AG04449 (cell line): ENCODE measurements at regions of chr11 and their contacts with region 1.

Region 1: GRCh38 chr11:64000026-64000739 is 13.9 kb downstream of the OTUB1 start:
- DNase-seq: no peak
- H3K4me3 ChIP-seq: peak overlapping the region; percentile 36
- CTCF ChIP-seq: peak; percentile 86

Region 2: DNA sequence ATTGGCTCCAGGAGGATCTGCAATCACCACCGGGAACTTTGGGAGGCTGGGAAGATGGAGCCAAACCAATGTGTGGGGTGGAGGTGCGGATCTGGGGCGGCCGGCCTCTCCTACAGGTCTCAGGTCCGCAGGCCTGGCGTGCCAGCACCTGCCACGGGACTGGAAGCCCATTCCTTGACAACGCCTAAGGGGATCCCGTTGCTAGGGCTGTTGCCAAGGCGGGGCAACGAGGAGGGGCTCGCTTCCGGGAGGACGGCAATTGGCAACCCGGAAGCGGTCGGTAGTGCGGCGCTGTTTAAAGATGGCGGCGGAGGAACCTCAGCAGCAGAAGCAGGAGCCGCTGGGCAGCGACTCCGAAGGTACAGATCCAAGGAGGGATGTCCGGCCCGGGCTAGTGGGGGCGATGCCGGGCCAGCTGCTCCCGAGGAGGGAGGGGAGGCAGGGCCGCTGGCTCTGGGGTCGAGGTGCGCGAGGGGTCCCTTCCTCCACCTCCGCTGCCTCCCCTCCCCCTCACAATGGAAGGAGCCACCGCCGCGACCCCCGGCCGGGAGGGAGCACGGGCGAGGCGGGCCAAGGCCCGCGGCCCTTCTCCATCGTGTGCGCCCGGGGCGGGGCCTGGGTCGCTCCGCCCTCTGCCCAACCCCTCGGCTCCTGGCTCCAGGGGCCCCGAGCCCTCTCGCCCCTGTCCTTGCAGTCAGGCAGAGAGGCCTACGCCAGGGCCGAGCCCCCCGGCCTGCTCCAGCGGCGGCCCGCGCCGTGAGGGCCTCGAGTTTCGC is 13.8 kb before region 1 on chr11 and contains the start of gene OTUB1:
- CTCF ChIA-PET with region 1: interaction called, 49 read pairs
- POLR2A ChIA-PET with region 1: no interaction called
- DNase-seq: peak; percentile 36
- H3K4me3 ChIP-seq: peak within 1 kb of the TSS; percentile 96
- CTCF ChIP-seq: no peak

Region 3: GRCh38 chr11:64028398-64029115 is 28.4 kb after region 1 on chr11:
- CTCF ChIA-PET with region 1: interaction called, 45 read pairs
- POLR2A ChIA-PET with region 1: no interaction called
- DNase-seq: no peak
- H3K4me3 ChIP-seq: no peak overlapping the region
- CTCF ChIP-seq: no peak

Region 4: GRCh38 chr11:64067230-64067993 is 67.2 kb after region 1 on chr11:
- CTCF ChIA-PET with region 1: no interaction called
- POLR2A ChIA-PET with region 1: no interaction called
- DNase-seq: no peak
- H3K4me3 ChIP-seq: no peak overlapping the region
- CTCF ChIP-seq: no peak

Region 5: DNA sequence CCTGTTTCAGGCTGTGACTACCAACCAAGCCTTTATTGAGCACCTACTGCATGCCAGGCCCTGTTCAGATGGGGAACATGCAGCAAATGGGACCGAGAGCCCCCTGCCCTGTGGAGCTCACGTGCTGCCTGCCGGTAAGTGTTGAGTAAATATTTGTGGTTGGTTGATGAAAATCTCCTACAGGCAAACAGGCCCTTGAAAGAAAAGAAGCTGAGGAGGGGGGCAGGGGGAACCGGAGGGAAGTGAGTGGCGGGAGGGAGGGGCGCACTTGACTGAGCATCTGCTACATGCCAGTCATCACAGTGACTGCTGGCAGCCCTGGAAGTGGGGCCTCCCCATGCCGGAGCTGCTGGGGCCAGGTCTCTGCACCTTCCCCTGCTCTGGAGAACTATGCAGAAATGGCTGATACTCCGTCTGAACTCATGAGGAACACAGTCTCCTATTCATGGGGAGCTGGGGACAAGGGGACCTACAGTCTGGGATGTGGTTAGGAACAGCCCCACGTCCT is 131.6 kb after region 1 on chr11:
- CTCF ChIA-PET with region 1: interaction called, 27 read pairs
- POLR2A ChIA-PET with region 1: no interaction called
- DNase-seq: no peak
- H3K4me3 ChIP-seq: no peak overlapping the region
- CTCF ChIP-seq: no peak

Region 6: DNA sequence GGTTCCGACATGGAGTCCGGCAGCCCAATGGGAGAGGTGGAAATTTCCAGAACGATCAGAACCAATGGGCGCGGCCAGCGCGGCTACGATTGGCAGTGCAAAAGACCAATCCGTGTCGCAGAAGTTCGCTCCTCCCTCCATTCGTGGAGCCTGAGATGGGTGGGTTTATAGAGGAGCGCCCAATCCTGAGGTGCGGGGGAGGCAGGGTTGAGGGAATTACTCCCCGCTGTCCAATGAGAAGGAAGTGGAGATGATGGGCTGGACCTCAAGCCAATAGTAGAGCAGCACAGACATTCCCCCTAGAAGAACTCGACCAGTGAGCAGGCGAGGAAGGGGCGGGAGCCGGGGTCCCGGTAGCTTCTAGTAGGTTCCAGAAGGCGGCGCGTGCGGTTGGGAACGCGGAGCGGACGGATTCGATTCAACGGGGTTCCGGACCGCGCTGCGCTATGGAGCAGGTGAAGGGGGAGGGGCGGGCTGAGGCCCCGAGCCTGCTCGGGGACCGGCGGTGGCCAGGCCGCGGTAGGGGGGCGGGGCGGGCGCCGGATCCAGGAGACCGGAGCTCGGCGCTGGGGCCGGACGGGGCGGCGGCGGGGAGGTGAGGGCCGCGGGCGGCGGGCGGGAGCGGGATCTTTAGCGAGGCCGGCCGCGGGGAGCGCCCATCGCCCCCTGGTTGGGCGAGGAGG is 185.8 kb after region 1 on chr11 and contains the start of gene STIP1:
- CTCF ChIA-PET with region 1: interaction called, 15 read pairs
- POLR2A ChIA-PET with region 1: interaction called, 3 read pairs
- DNase-seq: peak; percentile 100
- H3K4me3 ChIP-seq: peak within 1 kb of the TSS; percentile 71
- CTCF ChIP-seq: peak; percentile 69